CD8-positive, alpha-beta T cell (primary cell): ENCODE measurements at regions of chr3 and their contacts with region 1.

Region 1: GRCh38 chr3:100702082-100702979 is 7.0 kb upstream of the TFG start:
- DNase-seq: no peak
- ATAC-seq: no peak
- H3K4me3 ChIP-seq: no peak overlapping the region
- H3K4me3 Mint-ChIP-seq: no peak overlapping the region
- H3K27ac ChIP-seq: no peak overlapping the region
- H3K27ac Mint-ChIP-seq: no peak overlapping the region
- H3K4me1 ChIP-seq: no peaks in the 10 kb centered on the region
- H3K4me1 Mint-ChIP-seq: no peaks in the 10 kb centered on the region
- H3K27me3 ChIP-seq: no peaks in the 10 kb centered on the region
- H3K27me3 Mint-ChIP-seq: peaks cover 3% of the 10 kb centered on the region
- CTCF ChIP-seq: no peak

Region 2: DNA sequence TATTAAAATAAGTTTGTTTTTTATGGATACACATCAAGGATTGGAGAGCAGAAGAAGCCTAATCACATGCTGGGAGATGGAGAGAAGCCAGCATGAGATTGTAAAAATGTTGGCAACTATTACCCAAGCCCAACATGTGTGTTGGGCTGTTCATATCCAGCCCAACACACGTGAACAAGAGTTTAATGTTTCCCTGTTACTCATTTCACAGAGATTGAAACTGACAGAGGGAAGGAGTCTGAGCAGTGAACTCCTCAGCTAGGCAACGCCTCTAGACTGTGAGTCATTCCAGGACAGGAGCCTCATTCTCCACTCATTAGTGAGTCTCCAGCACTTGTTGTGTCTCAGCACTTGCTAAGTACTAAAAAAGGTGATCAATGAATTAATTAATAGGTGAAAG is 927.9 kb before region 1 on chr3:
- CTCF ChIA-PET with region 1: no interaction called
- POLR2A ChIA-PET with region 1: no interaction called
- intact Hi-C with region 1: no loop called
- DNase-seq: no peak
- ATAC-seq: no peak
- H3K4me3 ChIP-seq: no peak overlapping the region
- H3K4me3 Mint-ChIP-seq: no peak overlapping the region
- H3K27ac ChIP-seq: no peak overlapping the region
- H3K27ac Mint-ChIP-seq: no peak overlapping the region
- H3K4me1 ChIP-seq: no peaks in the 10 kb centered on the region
- H3K4me1 Mint-ChIP-seq: no peaks in the 10 kb centered on the region
- H3K27me3 ChIP-seq: no peaks in the 10 kb centered on the region
- H3K27me3 Mint-ChIP-seq: peaks cover 8% of the 10 kb centered on the region
- CTCF ChIP-seq: no peak

Region 3: GRCh38 chr3:99875929-99876841 is 826.1 kb before region 1 on chr3:
- CTCF ChIA-PET with region 1: no interaction called
- POLR2A ChIA-PET with region 1: no interaction called
- intact Hi-C with region 1: loop called in 1 of 2 experiments (anchors 5 kb)
- DNase-seq: peak; percentile 40 to 81 (median 66)
- ATAC-seq: peak; percentile 92
- H3K4me3 ChIP-seq: peak overlapping the region; percentile 60 to 65
- H3K4me3 Mint-ChIP-seq: peak overlapping the region; percentile 84
- H3K27ac ChIP-seq: peak overlapping the region in 1 of 2 experiments; percentile 32
- H3K27ac Mint-ChIP-seq: peak overlapping the region; percentile 64
- H3K4me1 ChIP-seq: peaks cover 13% of the 10 kb centered on the region
- H3K4me1 Mint-ChIP-seq: peaks cover 17% of the 10 kb centered on the region
- H3K27me3 ChIP-seq: no peaks in the 10 kb centered on the region
- H3K27me3 Mint-ChIP-seq: peaks cover 3% of the 10 kb centered on the region
- CTCF ChIP-seq: no peak

Region 4: GRCh38 chr3:100719136-100719535 is 16.8 kb after region 1 on chr3:
- CTCF ChIA-PET with region 1: interaction called, 3 read pairs
- POLR2A ChIA-PET with region 1: interaction called, 3 read pairs
- intact Hi-C with region 1: loop called in 1 of 2 experiments (anchors 2 kb)
- DNase-seq: no peak
- ATAC-seq: no peak
- H3K4me3 ChIP-seq: no peak overlapping the region
- H3K4me3 Mint-ChIP-seq: no peak overlapping the region
- H3K27ac ChIP-seq: no peak overlapping the region
- H3K27ac Mint-ChIP-seq: no peak overlapping the region
- H3K4me1 ChIP-seq: peaks cover 20% of the 10 kb centered on the region
- H3K4me1 Mint-ChIP-seq: peaks cover 39% of the 10 kb centered on the region
- H3K27me3 ChIP-seq: no peaks in the 10 kb centered on the region
- H3K27me3 Mint-ChIP-seq: no peaks in the 10 kb centered on the region
- CTCF ChIP-seq: no peak

Region 5: DNA sequence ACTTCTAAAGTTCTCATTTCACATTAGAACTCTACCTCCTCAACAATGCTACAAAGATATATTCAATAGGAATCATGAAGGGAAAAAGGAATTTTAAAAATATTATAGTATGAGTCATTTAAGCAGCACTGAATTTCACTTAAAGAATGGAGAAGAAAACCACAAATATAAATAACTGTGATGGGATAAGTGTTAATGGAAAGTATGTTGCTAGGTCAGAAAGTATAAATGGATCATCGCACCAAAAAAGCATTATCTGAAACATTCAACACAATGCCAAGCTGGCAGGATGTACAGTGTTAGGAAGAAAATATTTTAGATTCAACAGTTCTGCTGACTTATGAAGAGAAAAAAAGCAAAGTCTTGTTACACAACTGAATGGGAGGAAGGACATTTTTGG is 108.3 kb after region 1 on chr3:
- CTCF ChIA-PET with region 1: no interaction called
- POLR2A ChIA-PET with region 1: no interaction called
- intact Hi-C with region 1: no loop called
- DNase-seq: no peak
- ATAC-seq: no peak
- H3K4me3 ChIP-seq: no peak overlapping the region
- H3K4me3 Mint-ChIP-seq: no peak overlapping the region
- H3K27ac ChIP-seq: no peak overlapping the region
- H3K27ac Mint-ChIP-seq: no peak overlapping the region
- H3K4me1 ChIP-seq: no peaks in the 10 kb centered on the region
- H3K4me1 Mint-ChIP-seq: no peaks in the 10 kb centered on the region
- H3K27me3 ChIP-seq: no peaks in the 10 kb centered on the region
- H3K27me3 Mint-ChIP-seq: peaks cover 4% of the 10 kb centered on the region
- CTCF ChIP-seq: no peak